CD14-positive monocyte (primary cell): ENCODE measurements at regions of chr9 and their contacts with region 1.

Region 1: GRCh38 chr9:125746017-125746773 is 978 bp upstream of the PBX3 start:
- DNase-seq: peak; percentile 89 to 92 (median 89)
- H3K4me3 ChIP-seq: peak overlapping the region; percentile 58 to 83 (median 64)
- H3K4me3 Mint-ChIP-seq: peak overlapping the region; percentile 91 to 95
- H3K27ac ChIP-seq: peak overlapping the region; percentile 58 to 75
- H3K27ac Mint-ChIP-seq: peak overlapping the region; percentile 90 to 97 (median 93)
- H3K4me1 ChIP-seq: peaks cover 14 to 36% of the 10 kb centered on the region in 2 donors
- H3K4me1 Mint-ChIP-seq: peaks cover 30% of the 10 kb centered on the region
- H3K27me3 ChIP-seq: no peaks in the 10 kb centered on the region
- H3K27me3 Mint-ChIP-seq: peaks cover 0 to 2% (median 1%) of the 10 kb centered on the region in 3 donors
- CTCF ChIP-seq: no peak

Region 2: DNA sequence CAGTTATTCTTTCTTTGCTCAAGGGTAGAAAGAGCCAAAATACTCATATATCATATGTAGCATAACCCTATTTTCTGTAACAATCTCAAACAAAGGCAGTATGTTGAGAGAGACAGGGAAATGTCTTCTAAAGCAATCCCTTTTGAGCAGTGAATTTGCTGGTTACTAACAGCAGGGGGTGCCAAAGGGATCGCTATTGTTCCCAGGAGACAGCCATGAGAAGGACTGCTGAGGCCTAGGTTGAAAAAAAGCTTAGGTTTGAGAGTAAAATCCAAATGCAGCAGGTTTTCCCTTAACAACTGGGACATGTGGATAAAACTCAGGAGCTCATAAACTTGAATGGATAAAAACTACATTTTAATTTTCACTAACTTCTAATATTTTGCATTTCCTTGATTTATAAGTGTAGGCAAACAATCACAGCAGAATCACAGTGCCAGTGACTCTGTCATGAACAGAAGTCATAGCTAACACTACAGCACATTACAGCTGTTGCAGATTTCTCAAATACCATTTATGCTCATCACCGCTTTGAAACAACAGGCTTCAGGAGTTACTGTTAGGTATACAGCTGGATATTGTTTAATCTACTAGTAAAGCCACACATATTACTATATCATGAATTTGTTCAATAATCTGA is 187.6 kb before region 1 on chr9:
- intact Hi-C with region 1: loop called in 1 of 2 experiments (anchors 10 kb)
- DNase-seq: peak; percentile 49 to 73 (median 66)
- H3K4me3 ChIP-seq: no peak overlapping the region
- H3K4me3 Mint-ChIP-seq: no peak overlapping the region
- H3K27ac ChIP-seq: no peak overlapping the region
- H3K27ac Mint-ChIP-seq: peak overlapping the region in 1 of 7 donors; percentile 77
- H3K4me1 ChIP-seq: no peaks in the 10 kb centered on the region
- H3K4me1 Mint-ChIP-seq: peaks cover 7% of the 10 kb centered on the region
- H3K27me3 ChIP-seq: no peaks in the 10 kb centered on the region
- H3K27me3 Mint-ChIP-seq: no peaks in the 10 kb centered on the region
- CTCF ChIP-seq: peak; percentile 80

Region 3: GRCh38 chr9:125631391-125632085 is 114.7 kb before region 1 on chr9:
- intact Hi-C with region 1: loop called in 1 of 2 experiments (anchors 2 kb)
- DNase-seq: peak; percentile 38 to 65 (median 58)
- H3K4me3 ChIP-seq: peak overlapping the region in 1 of 3 experiments; percentile 16
- H3K4me3 Mint-ChIP-seq: peak overlapping the region; percentile 32 to 75
- H3K27ac ChIP-seq: peak overlapping the region; percentile 81 to 98
- H3K27ac Mint-ChIP-seq: peak overlapping the region; percentile 93 to 99 (median 98)
- H3K4me1 ChIP-seq: peaks cover 65 to 78% of the 10 kb centered on the region in 2 donors
- H3K4me1 Mint-ChIP-seq: peaks cover 80% of the 10 kb centered on the region
- H3K27me3 ChIP-seq: no peaks in the 10 kb centered on the region
- H3K27me3 Mint-ChIP-seq: peaks cover 0 to 2% (median 0%) of the 10 kb centered on the region in 3 donors
- CTCF ChIP-seq: peak; percentile 80

Region 4: GRCh38 chr9:125650271-125650737 is 95.9 kb before region 1 on chr9:
- intact Hi-C with region 1: loop called (anchors 5 kb)
- DNase-seq: peak; percentile 90 to 96 (median 94)
- H3K4me3 ChIP-seq: peak overlapping the region; percentile 2 to 38 (median 29)
- H3K4me3 Mint-ChIP-seq: peak overlapping the region; percentile 68 to 93
- H3K27ac ChIP-seq: peak overlapping the region; percentile 81 to 100
- H3K27ac Mint-ChIP-seq: peak overlapping the region; percentile 98 to 100 (median 100)
- H3K4me1 ChIP-seq: peaks cover 67 to 76% of the 10 kb centered on the region in 2 donors
- H3K4me1 Mint-ChIP-seq: peaks cover 74% of the 10 kb centered on the region
- H3K27me3 ChIP-seq: no peaks in the 10 kb centered on the region
- H3K27me3 Mint-ChIP-seq: peaks cover 0 to 2% (median 0%) of the 10 kb centered on the region in 3 donors
- CTCF ChIP-seq: no peak

Region 5: DNA sequence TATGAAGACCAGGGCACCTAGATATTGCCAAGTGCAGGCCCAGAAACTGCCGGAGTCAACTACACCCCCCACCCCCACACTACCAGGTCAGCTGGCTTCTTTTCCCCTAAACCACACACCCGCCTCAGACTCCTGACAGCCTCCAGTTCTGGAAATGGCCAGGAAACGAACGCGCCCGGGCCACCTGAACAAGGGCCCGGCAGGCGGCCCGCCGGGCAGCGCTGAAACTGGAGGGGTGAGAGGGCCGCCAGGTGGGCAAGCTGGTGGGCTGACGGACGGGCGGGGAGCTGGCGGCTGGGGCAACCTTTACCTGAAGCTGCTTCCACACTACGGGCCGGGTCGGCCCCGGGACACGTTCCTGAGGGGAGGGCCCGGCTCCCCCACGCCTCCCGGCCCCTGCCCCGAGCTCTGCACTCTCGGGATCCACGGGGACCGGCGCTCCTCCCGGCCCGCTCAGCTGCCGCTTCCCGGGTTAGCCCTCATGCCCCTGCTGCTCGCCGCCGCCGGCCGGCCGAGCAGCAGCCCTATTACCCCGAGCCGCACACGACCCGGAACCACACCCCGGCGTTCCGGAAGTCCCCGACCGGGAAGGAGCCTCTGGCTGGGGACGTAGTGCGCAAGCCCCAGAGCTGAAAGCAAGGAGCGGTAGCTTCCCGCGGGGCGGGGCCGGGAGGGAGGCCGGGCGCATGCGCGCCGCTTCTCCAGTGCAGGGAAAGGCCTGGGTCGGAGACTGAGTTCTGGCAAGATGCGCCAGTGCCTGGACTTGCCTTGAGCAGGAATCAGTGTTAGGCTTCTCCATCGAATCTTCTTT is 39.3 kb before region 1 on chr9 and contains the start of gene MAPKAP1:
- intact Hi-C with region 1: loop called (anchors 5 kb)
- DNase-seq: peak; percentile 95 to 99 (median 97)
- H3K4me3 ChIP-seq: peak within 1 kb of the TSS; percentile 57 to 88 (median 64)
- H3K4me3 Mint-ChIP-seq: peak within 1 kb of the TSS; percentile 82 to 87
- H3K27ac ChIP-seq: peak within 1 kb of the TSS; percentile 23 to 89
- H3K27ac Mint-ChIP-seq: peak within 1 kb of the TSS; percentile 57 to 93 (median 89)
- H3K4me1 ChIP-seq: peaks cover 15 to 20% of the 10 kb centered on the region in 2 donors
- H3K4me1 Mint-ChIP-seq: peaks cover 31% of the 10 kb centered on the region
- H3K27me3 ChIP-seq: no peaks in the 10 kb centered on the region
- H3K27me3 Mint-ChIP-seq: peaks cover 0 to 2% (median 0%) of the 10 kb centered on the region in 3 donors
- CTCF ChIP-seq: no peak
- polyA plus RNA-seq, gene MAPKAP1: 39.9 to 57.5 (median 44.1) TPM

Region 6: DNA sequence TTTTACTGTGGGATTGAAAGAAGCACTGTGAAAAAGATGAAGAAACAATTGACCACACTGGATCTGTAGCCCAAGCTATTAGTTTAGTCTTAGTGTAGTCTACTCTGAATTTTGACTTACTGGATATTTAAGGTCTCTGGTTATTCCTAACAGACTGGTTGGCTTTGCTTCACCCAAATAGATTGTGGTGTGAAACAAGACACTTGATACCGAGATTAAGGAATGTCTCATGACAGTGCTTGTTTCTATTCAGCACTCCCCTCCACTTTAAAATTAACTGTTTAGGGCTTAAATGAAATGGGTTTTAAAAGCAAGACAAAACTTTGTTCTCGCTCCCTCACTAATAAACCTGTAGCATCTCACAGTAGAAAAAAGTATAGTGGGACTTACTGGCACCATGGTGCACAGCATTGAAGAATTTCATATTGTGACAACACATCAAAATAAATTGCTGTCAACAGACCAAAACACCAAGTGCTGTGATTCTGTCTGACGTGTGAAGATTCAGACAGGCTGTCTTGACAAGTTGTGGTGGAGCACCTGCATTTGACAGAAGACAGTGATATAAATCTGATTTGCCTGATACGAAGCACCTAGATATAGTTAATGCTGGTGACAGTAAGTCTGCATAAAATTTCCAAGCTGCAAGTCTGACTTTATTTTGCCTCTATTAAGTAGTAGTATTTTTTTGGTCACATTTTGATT is 74.1 kb after region 1 on chr9:
- intact Hi-C with region 1: loop called in 1 of 2 experiments (anchors 5 kb)
- DNase-seq: no peak
- H3K4me3 ChIP-seq: no peak overlapping the region
- H3K4me3 Mint-ChIP-seq: no peak overlapping the region
- H3K27ac ChIP-seq: no peak overlapping the region
- H3K27ac Mint-ChIP-seq: no peak overlapping the region
- H3K4me1 ChIP-seq: peaks cover 9 to 34% of the 10 kb centered on the region in 2 donors
- H3K4me1 Mint-ChIP-seq: peaks cover 32% of the 10 kb centered on the region
- H3K27me3 ChIP-seq: no peaks in the 10 kb centered on the region
- H3K27me3 Mint-ChIP-seq: no peaks in the 10 kb centered on the region
- CTCF ChIP-seq: no peak

Region 7: DNA sequence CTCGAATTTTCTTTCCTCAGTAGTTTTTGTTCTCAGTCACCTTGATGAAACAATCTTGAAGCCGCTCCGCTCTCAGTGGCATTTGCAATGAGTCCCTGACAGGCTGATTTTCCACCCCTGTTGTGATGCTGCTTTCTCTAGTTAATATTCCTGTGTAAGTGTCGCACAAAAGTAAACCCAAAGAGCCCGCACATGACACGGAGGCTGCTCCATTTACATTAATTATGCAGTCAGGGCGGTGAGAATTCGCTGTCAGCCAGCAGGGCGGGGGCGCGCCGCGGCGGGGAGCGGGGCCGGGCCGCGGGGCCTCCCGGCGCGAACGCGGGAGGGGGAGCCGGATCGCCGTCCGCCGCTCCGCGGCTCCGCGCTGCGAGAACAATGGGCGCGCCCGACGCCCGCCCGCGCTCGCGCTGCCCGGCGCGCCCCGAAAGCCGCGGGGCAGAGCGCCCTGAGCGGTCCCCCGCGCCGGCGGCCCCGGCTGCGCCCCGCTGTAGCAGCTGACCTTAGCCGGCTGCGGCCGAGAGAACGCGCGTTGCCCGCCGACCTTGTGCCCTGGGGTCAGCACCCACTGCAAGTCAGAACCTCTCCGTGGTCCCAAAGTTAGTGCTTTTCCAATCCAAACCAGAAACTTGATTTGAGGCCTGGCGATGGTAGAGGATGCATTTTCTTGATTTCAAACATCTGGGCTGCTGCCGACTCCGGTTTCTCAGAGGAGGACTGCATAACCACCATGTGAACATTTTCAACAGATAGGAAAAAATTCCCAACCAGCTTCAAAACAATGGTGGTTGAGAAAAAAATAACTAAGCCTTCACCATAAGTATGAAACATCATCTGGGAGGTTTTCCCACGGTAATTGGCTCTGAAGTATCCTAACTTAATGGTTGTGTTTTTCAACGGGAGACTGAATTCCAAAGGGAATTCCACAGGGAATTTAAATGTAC is 143.6 kb after region 1 on chr9:
- intact Hi-C with region 1: loop called in 1 of 2 experiments (anchors 5 kb)
- DNase-seq: peak in 2 of 3 donors; percentile 5 to 6
- H3K4me3 ChIP-seq: peak overlapping the region; percentile 42 to 77 (median 59)
- H3K4me3 Mint-ChIP-seq: peak overlapping the region; percentile 87 to 99
- H3K27ac ChIP-seq: no peak overlapping the region
- H3K27ac Mint-ChIP-seq: peak overlapping the region in 2 of 7 donors; percentile 14 to 24
- H3K4me1 ChIP-seq: peaks cover 11 to 14% of the 10 kb centered on the region in 2 donors
- H3K4me1 Mint-ChIP-seq: peaks cover 25% of the 10 kb centered on the region
- H3K27me3 ChIP-seq: peaks cover 35 to 44% of the 10 kb centered on the region in 2 donors
- H3K27me3 Mint-ChIP-seq: peaks cover 24 to 33% (median 29%) of the 10 kb centered on the region in 3 donors
- CTCF ChIP-seq: no peak